Caco-2 (cell line): ENCODE measurements at regions of chr2 and their contacts with region 1.

Region 1: GRCh38 chr2:60480089-60480773 is 73.2 kb downstream of the BCL11A start:
- DNase-seq: peak; percentile 71 to 74
- H3K4me3 ChIP-seq: no peak overlapping the region
- H3K4me3 Mint-ChIP-seq: no peak overlapping the region
- H3K27ac Mint-ChIP-seq: no peak overlapping the region
- H3K4me1 ChIP-seq: peaks cover 15% of the 10 kb centered on the region
- H3K4me1 Mint-ChIP-seq: peaks cover 22% of the 10 kb centered on the region
- H3K27me3 ChIP-seq: no peaks in the 10 kb centered on the region
- H3K27me3 Mint-ChIP-seq: no peaks in the 10 kb centered on the region
- CTCF ChIP-seq: no peak

Region 2: GRCh38 chr2:60439219-60439974 is 40.8 kb before region 1 on chr2:
- CTCF ChIA-PET with region 1: no interaction called
- POLR2A ChIA-PET with region 1: no interaction called
- intact Hi-C with region 1: loop called (anchors 2 kb)
- DNase-seq: peak in 1 of 2 experiments; percentile 29
- H3K4me3 ChIP-seq: no peak overlapping the region
- H3K4me3 Mint-ChIP-seq: no peak overlapping the region
- H3K27ac Mint-ChIP-seq: no peak overlapping the region
- H3K4me1 ChIP-seq: peaks cover 8% of the 10 kb centered on the region
- H3K4me1 Mint-ChIP-seq: peaks cover 18% of the 10 kb centered on the region
- H3K27me3 ChIP-seq: no peaks in the 10 kb centered on the region
- H3K27me3 Mint-ChIP-seq: no peaks in the 10 kb centered on the region
- CTCF ChIP-seq: peak; percentile 38 to 71

Region 3: GRCh38 chr2:60530660-60531281 is 50.5 kb after region 1 on chr2:
- CTCF ChIA-PET with region 1: no interaction called
- POLR2A ChIA-PET with region 1: no interaction called
- intact Hi-C with region 1: no loop called
- DNase-seq: peak; percentile 52 to 62
- H3K4me3 ChIP-seq: no peak overlapping the region
- H3K4me3 Mint-ChIP-seq: peak overlapping the region; percentile 45
- H3K27ac Mint-ChIP-seq: no peak overlapping the region
- H3K4me1 ChIP-seq: peaks cover 9% of the 10 kb centered on the region
- H3K4me1 Mint-ChIP-seq: peaks cover 40% of the 10 kb centered on the region
- H3K27me3 ChIP-seq: no peaks in the 10 kb centered on the region
- H3K27me3 Mint-ChIP-seq: no peaks in the 10 kb centered on the region
- CTCF ChIP-seq: no peak